Pancreas (tissue), 10 donors: ENCODE measurements at regions of chr6 and their contacts with region 1.

Region 1: GRCh38 chr6:10800829-10801535 is 37.4 kb downstream of the MAK start:
- DNase-seq: peak; percentile 29 to 80 (median 58)
- ATAC-seq: peak; percentile 92 to 100 (median 98)
- H3K4me3 ChIP-seq: no peak overlapping the region
- H3K27ac ChIP-seq: no peak overlapping the region
- H3K4me1 ChIP-seq: no peaks in the 10 kb centered on the region
- H3K27me3 ChIP-seq: no peaks in the 10 kb centered on the region
- CTCF ChIP-seq: peak; percentile 95 to 98 (median 96)

Region 2: GRCh38 chr6:10478187-10479040 is 322.6 kb before region 1 on chr6:
- intact Hi-C with region 1: loop called in 1 of 3 experiments (anchors 5 kb)
- DNase-seq: no peak
- ATAC-seq: peak in 3 of 4 donors; percentile 57 to 73 (median 71)
- H3K4me3 ChIP-seq: no peak overlapping the region
- H3K27ac ChIP-seq: no peak overlapping the region
- H3K4me1 ChIP-seq: no peaks in the 10 kb centered on the region
- H3K27me3 ChIP-seq: no peaks in the 10 kb centered on the region
- CTCF ChIP-seq: peak; percentile 25 to 59 (median 41)

Region 3: GRCh38 chr6:10763006-10763405 is 38.0 kb before region 1 on chr6:
- intact Hi-C with region 1: no loop called
- DNase-seq: no peak
- ATAC-seq: no peak
- H3K4me3 ChIP-seq: no peak overlapping the region
- H3K27ac ChIP-seq: no peak overlapping the region
- H3K4me1 ChIP-seq: no peaks in the 10 kb centered on the region
- H3K27me3 ChIP-seq: no peaks in the 10 kb centered on the region
- CTCF ChIP-seq: no peak